ENCODE measurements at regions of chr17 and their contacts with region 1.

Region 1: GRCh38 chr17:75896415-75897159 is at the start of gene TRIM65:
- DNase-seq: peak; percentile 84 to 88
- H3K4me3 ChIP-seq: peak within 1 kb of the TSS; percentile 70 to 89
- H3K27ac ChIP-seq: peak within 1 kb of the TSS; percentile 92 to 93
- H3K4me1 ChIP-seq: peaks cover 0 to 13% of the 10 kb centered on the region in 2 donors
- H3K27me3 ChIP-seq: no peaks in the 10 kb centered on the region
- CTCF ChIP-seq: peak; percentile 35 to 79 (median 64)
- POLR2A ChIP-seq: peak; percentile 61 to 89
- total RNA-seq, gene TRIM65: 20.0 to 36.9 (median 30.1) TPM

Region 2: DNA sequence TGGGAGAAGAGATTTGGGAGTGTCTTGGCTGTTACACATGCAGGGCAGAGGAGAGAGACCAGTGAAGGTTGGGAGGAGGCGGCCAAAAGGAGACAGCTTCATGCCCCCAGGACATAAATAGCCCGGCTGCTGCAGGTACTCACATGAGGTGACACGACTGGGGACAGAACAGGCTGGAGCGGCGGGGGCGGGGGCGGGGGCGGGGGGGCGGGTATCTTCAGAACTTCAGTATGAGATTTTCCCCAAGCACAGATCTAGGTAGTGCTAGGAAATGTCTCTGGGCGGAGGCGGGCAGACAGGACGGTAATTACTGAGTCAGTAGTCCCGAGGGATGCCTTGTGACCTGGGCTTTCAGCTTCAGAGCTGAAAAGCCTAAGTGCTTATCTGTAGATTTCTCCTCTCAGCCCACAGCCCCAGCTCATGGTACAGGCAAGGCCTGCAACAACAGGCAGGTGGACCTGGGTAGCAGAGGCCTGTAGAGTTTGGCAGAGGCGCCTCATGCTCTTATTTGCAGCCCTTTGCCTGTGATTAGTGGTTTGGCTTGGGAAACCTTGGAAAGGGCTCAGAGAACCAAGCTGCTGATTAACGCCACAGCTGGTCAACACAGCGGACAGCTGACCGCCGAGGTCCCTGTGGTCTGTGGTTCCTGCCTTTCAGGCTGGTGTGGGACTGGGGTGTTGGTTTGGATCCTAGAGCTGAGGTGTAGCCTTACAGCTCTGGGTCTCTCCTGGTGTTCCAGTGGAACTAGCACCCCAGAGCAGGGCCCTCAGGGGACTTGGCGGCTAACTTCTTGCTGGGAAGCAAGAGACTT is 87.5 kb before region 1 on chr17:
- intact Hi-C with region 1: no loop called
- DNase-seq: peak; percentile 68 to 78
- H3K4me3 ChIP-seq: no peak overlapping the region
- H3K27ac ChIP-seq: peak overlapping the region; percentile 72 to 81
- H3K4me1 ChIP-seq: peaks cover 0 to 8% of the 10 kb centered on the region in 2 donors
- H3K27me3 ChIP-seq: no peaks in the 10 kb centered on the region
- CTCF ChIP-seq: no peak
- POLR2A ChIP-seq: no peak

Region 3: GRCh38 chr17:75822119-75822799 is 74.3 kb before region 1 on chr17:
- intact Hi-C with region 1: no loop called
- DNase-seq: peak; percentile 47 to 57
- H3K4me3 ChIP-seq: no peak overlapping the region
- H3K27ac ChIP-seq: peak overlapping the region; percentile 29 to 35
- H3K4me1 ChIP-seq: peaks cover 0 to 5% of the 10 kb centered on the region in 2 donors
- H3K27me3 ChIP-seq: no peaks in the 10 kb centered on the region
- CTCF ChIP-seq: no peak
- POLR2A ChIP-seq: no peak

Region 4: DNA sequence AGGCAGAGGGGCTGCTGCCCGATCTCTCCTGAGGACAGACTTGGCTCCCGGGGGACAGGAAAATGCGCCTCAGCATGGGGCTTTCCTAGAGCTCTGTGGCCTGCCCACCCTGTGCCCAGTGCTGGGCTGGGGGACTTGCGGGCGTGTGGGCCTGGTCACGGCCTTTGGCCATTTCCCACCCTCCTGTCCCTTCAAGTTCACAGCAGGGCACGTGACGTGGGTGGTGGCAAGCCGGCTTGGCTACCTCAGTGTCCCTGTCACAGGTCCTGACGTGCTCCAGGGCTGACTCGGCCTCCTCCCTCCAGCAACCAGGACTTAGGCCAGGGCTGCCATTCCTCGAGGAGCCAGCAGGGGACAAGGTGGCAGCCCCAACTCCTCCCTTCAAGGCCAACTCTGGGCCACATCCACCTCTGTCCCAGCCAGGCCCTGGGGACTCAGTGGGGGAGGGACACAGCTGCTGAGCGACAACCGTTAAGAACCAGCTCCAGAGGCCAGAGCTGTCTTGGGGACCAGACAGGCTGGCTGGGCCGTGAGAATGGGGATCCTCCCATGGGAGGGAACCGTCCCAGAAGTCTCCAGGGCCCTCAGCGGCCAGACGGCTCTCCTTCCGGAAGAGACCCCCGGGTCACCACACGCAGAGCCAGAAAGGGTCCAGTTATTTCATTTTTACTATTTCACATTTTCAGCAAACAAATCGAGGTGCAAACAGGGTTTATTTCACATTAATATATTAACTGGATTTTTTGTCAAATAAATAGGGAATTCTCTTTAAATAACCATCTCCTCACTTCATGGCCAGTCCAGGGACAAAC is 51.3 kb before region 1 on chr17:
- intact Hi-C with region 1: loop called (anchors 10 kb)
- DNase-seq: peak; percentile 62 to 69
- H3K4me3 ChIP-seq: no peak overlapping the region
- H3K27ac ChIP-seq: peak overlapping the region; percentile 47 to 48
- H3K4me1 ChIP-seq: peaks cover 4 to 14% of the 10 kb centered on the region in 2 donors
- H3K27me3 ChIP-seq: no peaks in the 10 kb centered on the region
- CTCF ChIP-seq: peak; percentile 37 to 75 (median 65)
- POLR2A ChIP-seq: no peak

Region 5: GRCh38 chr17:75950821-75951554 is 54.4 kb after region 1 on chr17:
- intact Hi-C with region 1: no loop called
- DNase-seq: no peak
- H3K4me3 ChIP-seq: no peak overlapping the region
- H3K27ac ChIP-seq: no peak overlapping the region
- H3K4me1 ChIP-seq: no peaks in the 10 kb centered on the region
- H3K27me3 ChIP-seq: no peaks in the 10 kb centered on the region
- CTCF ChIP-seq: no peak
- POLR2A ChIP-seq: no peak

Region 6: GRCh38 chr17:75970011-75970523 is 73.5 kb after region 1 on chr17:
- intact Hi-C with region 1: no loop called
- DNase-seq: no peak
- H3K4me3 ChIP-seq: no peak overlapping the region
- H3K27ac ChIP-seq: no peak overlapping the region
- H3K4me1 ChIP-seq: no peaks in the 10 kb centered on the region
- H3K27me3 ChIP-seq: no peaks in the 10 kb centered on the region
- CTCF ChIP-seq: no peak
- POLR2A ChIP-seq: no peak